ENCODE measurements at regions of chr15 and their contacts with region 1.

Region 1: GRCh38 chr15:57654153-57654852 is 52.2 kb upstream of the POLR2M start:
- DNase-seq: peak; percentile 27
- ATAC-seq: no peak; the same call in 1 of the 2 replicates
- H3K4me3 ChIP-seq: no peak overlapping the region
- H3K27ac ChIP-seq: no peak overlapping the region
- H3K4me1 ChIP-seq: no peaks in the 10 kb centered on the region
- H3K27me3 ChIP-seq: peaks cover 2% of the 10 kb centered on the region
- CTCF ChIP-seq: no peak
- POLR2A ChIP-seq: no peak
- RAD21 ChIP-seq: no peak

Region 2: DNA sequence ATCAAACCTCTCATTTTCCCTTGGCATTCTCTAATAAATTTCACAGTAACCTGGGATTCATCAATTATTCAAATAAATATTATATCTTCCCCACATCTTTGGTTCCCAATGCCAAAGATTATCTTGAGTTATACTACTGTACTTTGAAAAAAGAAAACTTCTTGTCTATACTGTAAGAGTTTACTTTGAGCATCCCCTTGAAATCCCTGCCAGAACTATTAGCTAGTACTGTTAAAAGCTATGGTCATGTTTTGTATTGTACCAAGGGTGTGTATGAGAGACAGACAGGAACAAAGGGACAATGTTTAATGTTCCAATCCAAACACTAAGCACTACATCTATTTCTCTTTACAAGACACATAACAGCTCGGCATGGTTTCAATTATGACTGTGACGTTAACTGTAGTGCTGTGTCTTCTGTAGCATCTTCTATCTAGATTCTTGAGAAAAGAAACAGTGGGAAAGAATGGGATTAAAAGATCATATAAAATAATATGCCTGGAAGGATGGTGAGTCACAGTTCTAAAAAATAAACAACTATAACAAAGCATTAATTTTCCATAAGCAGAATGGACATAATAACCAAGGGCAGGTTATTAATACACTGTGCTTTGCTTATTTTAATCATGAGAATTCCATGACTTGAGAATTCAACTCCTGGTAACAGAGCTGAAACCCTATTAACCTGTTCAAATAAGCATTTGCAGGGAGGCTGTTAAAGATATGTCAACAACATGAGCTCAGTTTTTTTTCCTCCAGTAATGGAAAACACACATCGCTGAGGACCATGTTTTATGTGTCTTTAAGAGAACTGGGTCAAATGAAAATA is 340.1 kb after region 1 on chr15:
- CTCF ChIA-PET with region 1: no interaction called
- POLR2A ChIA-PET with region 1: interaction called, 12 read pairs
- dilution Hi-C with region 1: no loop called
- in situ Hi-C with region 1: no loop called
- intact Hi-C with region 1: no loop called
- DNase-seq: no peak
- ATAC-seq: no peak
- H3K4me3 ChIP-seq: no peak overlapping the region
- H3K27ac ChIP-seq: no peak overlapping the region
- H3K4me1 ChIP-seq: no peaks in the 10 kb centered on the region
- H3K27me3 ChIP-seq: no peaks in the 10 kb centered on the region; the same call in 1 of the 2 replicates
- CTCF ChIP-seq: no peak
- POLR2A ChIP-seq: no peak
- RAD21 ChIP-seq: no peak

Region 3: GRCh38 chr15:58165661-58166060 is 511.4 kb after region 1 on chr15:
- CTCF ChIA-PET with region 1: no interaction called
- POLR2A ChIA-PET with region 1: no interaction called
- dilution Hi-C with region 1: no loop called
- in situ Hi-C with region 1: no loop called
- intact Hi-C with region 1: loop called (anchors 5 kb)
- DNase-seq: peak; percentile 9
- ATAC-seq: no peak
- H3K4me3 ChIP-seq: no peak overlapping the region
- H3K27ac ChIP-seq: no peak overlapping the region
- H3K4me1 ChIP-seq: no peaks in the 10 kb centered on the region
- H3K27me3 ChIP-seq: peaks cover 9% of the 10 kb centered on the region; the same call in 1 of the 2 replicates
- CTCF ChIP-seq: no peak
- POLR2A ChIP-seq: no peak
- RAD21 ChIP-seq: no peak